Mammary epithelial cell (primary cell): ENCODE measurements at regions of chr20 and their contacts with region 1.

Region 1: GRCh38 chr20:259981-260380 is 2.5 kb downstream of the DEFB132 start:
- DNase-seq: no peak
- H3K4me3 ChIP-seq: no peak overlapping the region
- H3K27ac ChIP-seq: no peak overlapping the region
- H3K4me1 ChIP-seq: no peaks in the 10 kb centered on the region
- H3K27me3 ChIP-seq: peaks cover 4% of the 10 kb centered on the region
- CTCF ChIP-seq: no peak

Region 2: DNA sequence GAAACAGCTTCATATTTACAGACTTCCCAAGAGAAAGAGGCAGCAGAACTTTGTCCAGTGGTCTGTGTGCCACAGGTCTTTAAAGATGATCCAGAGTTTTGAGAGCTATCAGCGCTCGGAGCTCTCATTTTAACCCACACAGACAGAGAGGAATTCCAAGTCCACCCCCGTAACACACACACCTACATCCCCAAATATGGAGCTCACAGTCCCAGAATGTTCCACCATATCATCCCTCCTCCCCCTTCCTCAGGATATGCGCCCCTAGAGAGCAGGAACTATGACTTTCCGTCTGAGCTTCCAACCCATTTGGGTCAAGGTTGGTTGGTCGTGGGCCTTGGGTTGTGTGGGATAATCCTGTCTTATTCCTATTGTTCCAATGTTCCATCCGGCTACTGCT is 70.4 kb before region 1 on chr20 and contains the start of gene DEFB128:
- CTCF ChIA-PET with region 1: no interaction called
- dilution Hi-C with region 1: loop called (anchors 5 kb)
- in situ Hi-C with region 1: no loop called
- intact Hi-C with region 1: no loop called
- DNase-seq: no peak
- H3K4me3 ChIP-seq: no peak within 1 kb of the TSS
- H3K27ac ChIP-seq: no peak within 1 kb of the TSS
- H3K4me1 ChIP-seq: no peaks in the 10 kb centered on the region
- H3K27me3 ChIP-seq: peaks cover 11% of the 10 kb centered on the region
- CTCF ChIP-seq: no peak
- total RNA-seq, gene DEFB128: not detected

Region 3: GRCh38 chr20:219290-220115 is 40.5 kb before region 1 on chr20:
- CTCF ChIA-PET with region 1: no interaction called
- dilution Hi-C with region 1: no loop called
- in situ Hi-C with region 1: no loop called
- intact Hi-C with region 1: no loop called
- DNase-seq: peak; percentile 21
- H3K4me3 ChIP-seq: no peak overlapping the region
- H3K27ac ChIP-seq: no peak overlapping the region
- H3K4me1 ChIP-seq: no peaks in the 10 kb centered on the region
- H3K27me3 ChIP-seq: peaks cover 7% of the 10 kb centered on the region
- CTCF ChIP-seq: peak; percentile 35 to 66